ENCODE measurements at regions of chr12 and their contacts with region 1.

Region 1: GRCh38 chr12:98698603-98699463 is 53.7 kb downstream of the APAF1 start:
- DNase-seq: peak; percentile 43 to 84 (median 53)
- ATAC-seq: peak; percentile 89 to 94
- H3K4me3 ChIP-seq: no peak overlapping the region
- H3K27ac ChIP-seq: no peak overlapping the region
- H3K4me1 ChIP-seq: no peaks in the 10 kb centered on the region
- H3K27me3 ChIP-seq: no peaks in the 10 kb centered on the region

Region 2: DNA sequence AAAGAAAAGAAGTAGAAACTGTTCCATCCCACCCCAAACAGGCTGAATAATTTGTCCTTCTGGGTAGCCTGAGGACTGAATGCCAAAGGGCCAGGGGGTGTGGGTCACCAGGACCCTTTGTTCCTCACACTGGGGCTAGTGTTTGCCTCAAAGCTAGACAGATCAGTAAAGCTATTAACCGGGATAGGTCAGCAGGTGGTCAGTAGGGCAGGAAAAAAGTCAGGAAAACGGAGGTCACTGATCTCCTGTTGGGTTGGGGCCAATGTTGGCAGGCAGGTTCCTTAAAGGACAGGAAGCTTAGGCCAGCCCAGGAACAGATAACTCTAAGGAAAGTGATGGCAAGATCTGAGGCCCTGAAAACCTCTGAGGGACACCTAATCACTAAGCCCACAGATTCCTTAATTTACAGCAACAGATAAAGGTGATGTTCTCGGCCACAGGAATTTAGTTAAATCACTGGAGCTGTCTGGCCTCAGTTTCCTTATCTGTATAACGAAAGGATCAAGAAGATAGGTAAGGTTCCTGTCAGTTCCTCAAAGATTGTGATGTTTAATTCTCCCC is 206.2 kb before region 1 on chr12:
- intact Hi-C with region 1: no loop called
- DNase-seq: no peak
- ATAC-seq: peak; percentile 25 to 49
- H3K4me3 ChIP-seq: no peak overlapping the region
- H3K27ac ChIP-seq: no peak overlapping the region
- H3K4me1 ChIP-seq: no peaks in the 10 kb centered on the region
- H3K27me3 ChIP-seq: no peaks in the 10 kb centered on the region

Region 3: DNA sequence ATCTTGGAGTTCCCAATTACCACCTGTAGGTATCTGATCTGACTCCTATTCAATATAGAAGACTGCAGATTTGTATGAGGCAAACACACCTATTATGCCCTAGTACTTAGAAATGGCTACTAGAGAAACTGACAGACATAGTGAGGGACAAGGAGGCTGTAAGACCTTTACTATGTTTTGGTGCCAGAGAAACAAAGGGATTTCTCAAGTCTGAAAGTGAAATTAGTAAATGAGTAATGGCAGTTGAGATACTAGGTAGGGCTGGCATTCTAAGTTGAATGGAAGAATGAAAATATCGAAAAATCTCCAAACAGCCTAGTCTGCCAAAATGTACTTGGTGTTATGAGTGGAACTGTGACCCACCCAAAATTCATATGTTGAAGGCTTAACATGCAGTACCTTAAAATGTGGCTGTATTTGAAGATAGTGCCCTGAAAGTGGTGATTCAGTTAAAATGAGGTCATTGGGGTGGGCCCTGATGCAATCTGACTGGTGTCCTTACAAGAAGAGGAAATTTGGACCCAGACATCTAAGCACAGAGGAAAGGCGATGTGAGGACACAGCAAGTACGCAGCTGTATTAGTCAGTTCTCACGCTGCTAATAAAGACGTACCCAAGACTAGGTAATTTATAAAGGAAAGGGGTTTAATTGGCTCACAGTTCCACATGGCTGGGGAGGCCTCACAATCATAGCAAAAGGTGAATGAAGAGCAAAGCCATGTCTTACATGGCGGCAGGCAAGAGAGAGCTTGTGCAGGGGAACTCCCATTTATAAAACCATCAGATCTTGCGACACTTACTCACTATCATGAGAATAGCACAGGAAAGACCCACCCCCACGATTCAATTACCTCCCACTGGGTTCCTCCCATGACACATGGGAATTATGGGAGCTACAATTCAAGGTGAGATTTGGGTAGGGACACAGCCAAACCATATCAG is 73.2 kb after region 1 on chr12:
- intact Hi-C with region 1: no loop called
- DNase-seq: no peak
- ATAC-seq: no peak
- H3K4me3 ChIP-seq: no peak overlapping the region
- H3K27ac ChIP-seq: no peak overlapping the region
- H3K4me1 ChIP-seq: no peaks in the 10 kb centered on the region
- H3K27me3 ChIP-seq: no peaks in the 10 kb centered on the region

Region 4: GRCh38 chr12:98838231-98838647 is 139.4 kb after region 1 on chr12:
- intact Hi-C with region 1: no loop called
- DNase-seq: no peak
- ATAC-seq: no peak
- H3K4me3 ChIP-seq: no peak overlapping the region
- H3K27ac ChIP-seq: no peak overlapping the region
- H3K4me1 ChIP-seq: no peaks in the 10 kb centered on the region
- H3K27me3 ChIP-seq: peaks cover 2% of the 10 kb centered on the region

Region 5: DNA sequence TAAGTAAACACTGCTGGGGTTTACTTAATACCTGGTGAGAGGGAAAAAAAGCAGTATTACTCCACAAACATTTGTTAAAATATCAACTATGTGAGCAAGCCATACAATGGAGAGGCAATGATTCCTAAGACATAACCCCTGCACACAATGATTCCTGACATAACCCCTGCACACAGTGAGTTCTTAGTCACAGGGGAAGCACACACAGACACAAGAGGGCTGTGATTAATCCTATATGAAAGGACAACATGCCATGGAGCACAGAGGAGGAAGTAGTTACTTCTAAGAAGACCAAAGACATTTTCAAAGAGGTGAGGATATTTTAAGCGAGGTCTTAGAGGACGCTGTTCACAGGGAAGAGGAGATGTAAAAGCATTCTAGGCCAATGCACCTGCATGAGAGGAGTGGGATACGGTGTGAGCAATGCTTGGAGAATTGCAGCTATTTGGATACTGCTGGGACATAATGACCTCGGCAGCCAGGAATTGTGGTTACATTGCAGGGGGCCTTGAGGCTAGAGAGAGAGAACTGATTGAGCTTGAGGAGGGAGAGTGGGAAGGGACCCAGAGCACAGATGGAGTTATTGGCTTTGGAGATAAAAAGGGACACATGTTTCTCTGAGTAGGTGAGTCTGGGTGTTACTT is 158.2 kb after region 1 on chr12:
- intact Hi-C with region 1: no loop called
- DNase-seq: no peak
- ATAC-seq: no peak
- H3K4me3 ChIP-seq: no peak overlapping the region
- H3K27ac ChIP-seq: no peak overlapping the region
- H3K4me1 ChIP-seq: no peaks in the 10 kb centered on the region
- H3K27me3 ChIP-seq: no peaks in the 10 kb centered on the region

Region 6: DNA sequence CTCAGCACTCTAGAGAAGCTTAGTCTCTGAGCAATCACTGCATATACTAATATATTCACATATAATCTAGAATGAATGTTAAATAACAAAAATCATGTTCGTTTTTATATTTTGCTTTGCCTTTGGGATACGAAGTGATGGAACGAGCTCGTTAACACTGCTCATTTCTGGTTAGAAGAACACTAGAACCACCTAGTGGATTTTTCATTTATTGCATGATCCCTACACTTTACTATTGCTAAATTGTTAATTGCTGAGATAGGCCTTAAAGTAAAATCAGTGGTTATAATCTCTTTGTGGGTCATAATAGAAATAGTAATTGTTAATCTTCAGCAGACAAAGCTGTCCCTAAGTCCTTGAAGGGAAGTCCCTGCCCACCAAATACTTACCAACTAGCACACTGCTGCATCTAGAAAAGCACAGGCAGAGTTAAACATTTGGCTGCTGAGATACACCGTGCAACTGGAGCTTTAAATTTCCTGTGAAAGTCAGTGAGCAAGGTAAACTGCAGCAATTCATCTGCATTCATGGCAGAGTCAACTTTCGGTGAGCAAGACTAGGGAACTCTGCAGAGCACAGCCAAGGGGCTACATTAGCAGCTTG is 300.0 kb after region 1 on chr12:
- intact Hi-C with region 1: loop called in 3 of 4 experiments (anchors 5 kb)
- DNase-seq: no peak
- ATAC-seq: peak; percentile 59 to 71
- H3K4me3 ChIP-seq: no peak overlapping the region
- H3K27ac ChIP-seq: no peak overlapping the region
- H3K4me1 ChIP-seq: no peaks in the 10 kb centered on the region
- H3K27me3 ChIP-seq: no peaks in the 10 kb centered on the region

Measured in right cardiac atrium (tissue), 5 donors.